Calu3 (cell line): ENCODE measurements at regions of chr7 and their contacts with region 1.

Region 1: GRCh38 chr7:38351601-38352000 is 78.2 kb upstream of the TARP start:
- DNase-seq: no peak
- H3K4me3 Mint-ChIP-seq: no peak overlapping the region
- H3K27ac Mint-ChIP-seq: no peak overlapping the region
- H3K4me1 Mint-ChIP-seq: no peaks in the 10 kb centered on the region
- H3K27me3 Mint-ChIP-seq: no peaks in the 10 kb centered on the region
- CTCF ChIP-seq: no peak

Region 2: GRCh38 chr7:38368191-38368605 is 16.6 kb after region 1 on chr7:
- CTCF ChIA-PET with region 1: interaction called, 15 read pairs
- intact Hi-C with region 1: no loop called
- DNase-seq: peak; percentile 90
- H3K4me3 Mint-ChIP-seq: no peak overlapping the region
- H3K27ac Mint-ChIP-seq: no peak overlapping the region
- H3K4me1 Mint-ChIP-seq: no peaks in the 10 kb centered on the region
- H3K27me3 Mint-ChIP-seq: no peaks in the 10 kb centered on the region
- CTCF ChIP-seq: peak; percentile 83